ENCODE measurements at regions of chr1 and their contacts with region 1.

Region 1: GRCh38 chr1:168561989-168562388 is 14.4 kb upstream of the XCL1 start:
- DNase-seq: no peak
- ATAC-seq: no peak
- H3K4me3 ChIP-seq: no peak overlapping the region
- H3K27ac ChIP-seq: no peak overlapping the region
- H3K4me1 ChIP-seq: no peaks in the 10 kb centered on the region
- H3K27me3 ChIP-seq: no peaks in the 10 kb centered on the region
- CTCF ChIP-seq: no peak

Region 2: DNA sequence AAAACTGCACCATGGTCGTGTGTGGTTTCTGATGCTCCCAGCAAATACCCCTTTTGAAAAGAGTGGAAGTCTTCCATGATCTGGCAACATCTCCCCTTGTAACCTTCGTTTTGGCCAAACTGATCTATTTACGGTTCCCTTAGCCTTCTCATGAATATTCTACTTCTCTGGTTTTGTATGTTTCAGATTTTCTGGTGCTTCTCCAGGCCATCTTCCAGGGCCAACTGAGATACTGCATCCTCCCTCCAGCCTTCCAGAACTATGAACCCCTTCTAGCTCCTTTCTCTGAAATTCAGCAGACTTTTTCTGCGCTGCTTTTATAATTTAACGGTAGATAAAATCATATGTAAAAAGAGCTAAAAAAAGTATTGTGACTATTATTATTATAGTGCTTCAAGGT is 115.9 kb before region 1 on chr1:
- intact Hi-C with region 1: loop called in 1 of 2 experiments (anchors 5 kb)
- DNase-seq: no peak
- ATAC-seq: no peak
- H3K4me3 ChIP-seq: no peak overlapping the region
- H3K27ac ChIP-seq: no peak overlapping the region
- H3K4me1 ChIP-seq: no peaks in the 10 kb centered on the region
- H3K27me3 ChIP-seq: no peaks in the 10 kb centered on the region
- CTCF ChIP-seq: no peak

Region 3: DNA sequence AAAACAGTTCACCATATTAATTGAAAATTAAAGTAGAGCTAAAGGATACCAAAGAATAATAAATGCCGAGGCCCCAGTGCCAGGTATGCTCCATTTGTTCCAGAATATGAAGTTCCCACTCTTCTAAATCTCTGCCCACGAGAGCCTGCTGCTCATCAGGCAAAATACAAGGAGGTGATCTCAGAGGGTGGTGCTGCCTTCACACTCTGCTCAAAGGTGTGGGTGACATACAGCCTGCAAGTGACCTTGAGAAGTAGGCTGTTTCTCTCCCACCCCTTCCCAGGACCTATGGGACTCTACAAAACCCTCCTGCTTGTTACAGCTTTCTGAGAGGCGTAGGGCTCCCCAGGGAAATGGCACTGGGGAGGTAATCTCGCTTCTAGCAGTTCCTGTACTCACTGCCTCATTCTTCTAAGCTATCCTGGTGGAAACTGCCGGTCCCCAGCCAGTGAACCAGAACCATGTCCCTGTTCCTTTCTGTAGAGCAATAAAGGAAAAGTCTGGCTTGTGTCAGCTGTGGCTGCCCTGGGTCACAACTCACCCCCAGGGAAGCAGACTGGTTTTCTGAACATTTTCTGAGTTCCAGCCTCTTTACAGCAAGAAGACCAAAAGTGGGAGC is 193.9 kb after region 1 on chr1:
- intact Hi-C with region 1: no loop called
- DNase-seq: no peak
- ATAC-seq: no peak
- H3K4me3 ChIP-seq: no peak overlapping the region
- H3K27ac ChIP-seq: no peak overlapping the region
- H3K4me1 ChIP-seq: no peaks in the 10 kb centered on the region
- H3K27me3 ChIP-seq: no peaks in the 10 kb centered on the region
- CTCF ChIP-seq: no peak

Region 4: DNA sequence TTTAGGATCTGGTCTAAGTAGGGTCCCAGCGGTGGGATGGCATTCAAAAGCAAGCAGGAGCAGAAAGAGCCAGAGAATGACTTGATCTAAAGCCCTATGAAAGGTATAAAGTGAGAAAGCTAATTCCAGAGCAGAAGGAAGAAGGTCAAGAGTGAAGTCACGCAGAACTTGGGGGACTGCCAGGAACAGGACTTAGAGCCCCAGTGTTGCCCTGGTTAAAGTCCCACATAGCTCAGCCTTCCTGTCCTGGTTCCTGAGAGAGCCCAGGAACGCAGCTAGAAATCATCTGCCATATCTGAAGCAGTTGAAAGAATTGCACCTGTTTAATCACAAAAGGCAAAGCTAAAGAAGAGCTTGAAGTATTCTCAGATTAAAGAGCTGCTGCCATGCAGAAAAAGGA is 383.9 kb after region 1 on chr1:
- intact Hi-C with region 1: no loop called
- DNase-seq: peak in 2 of 4 donors; percentile 28 to 44
- ATAC-seq: peak; percentile 91
- H3K4me3 ChIP-seq: no peak overlapping the region
- H3K27ac ChIP-seq: no peak overlapping the region
- H3K4me1 ChIP-seq: no peaks in the 10 kb centered on the region
- H3K27me3 ChIP-seq: no peaks in the 10 kb centered on the region
- CTCF ChIP-seq: no peak